HEK293 (cell line): ENCODE measurements at regions of chr21 and their contacts with region 1.

Region 1: GRCh38 chr21:45098867-45099266 is 24.5 kb downstream of the ADARB1 start:
- H3K4me3 ChIP-seq: no peak overlapping the region
- H3K27ac ChIP-seq: no peak overlapping the region
- H3K4me1 ChIP-seq: 0 out of 2 replicates have a peak, but pooled peaks cover under 1% of the 10 kb centered on the region
- CTCF ChIP-seq: peak; percentile 49; the same call in 1 of the 2 replicates

Region 2: GRCh38 chr21:45110873-45111624 is 12.2 kb after region 1 on chr21:
- CTCF ChIA-PET with region 1: interaction called, 16 read pairs
- POLR2A ChIA-PET with region 1: no interaction called
- H3K4me3 ChIP-seq: no peak overlapping the region
- H3K27ac ChIP-seq: no peak overlapping the region
- H3K4me1 ChIP-seq: peaks cover 10% of the 10 kb centered on the region; the same call in 1 of the 2 replicates
- CTCF ChIP-seq: no peak